Endothelial cell of umbilical vein (primary cell): ENCODE measurements at regions of chr19 and their contacts with region 1.

Region 1: DNA sequence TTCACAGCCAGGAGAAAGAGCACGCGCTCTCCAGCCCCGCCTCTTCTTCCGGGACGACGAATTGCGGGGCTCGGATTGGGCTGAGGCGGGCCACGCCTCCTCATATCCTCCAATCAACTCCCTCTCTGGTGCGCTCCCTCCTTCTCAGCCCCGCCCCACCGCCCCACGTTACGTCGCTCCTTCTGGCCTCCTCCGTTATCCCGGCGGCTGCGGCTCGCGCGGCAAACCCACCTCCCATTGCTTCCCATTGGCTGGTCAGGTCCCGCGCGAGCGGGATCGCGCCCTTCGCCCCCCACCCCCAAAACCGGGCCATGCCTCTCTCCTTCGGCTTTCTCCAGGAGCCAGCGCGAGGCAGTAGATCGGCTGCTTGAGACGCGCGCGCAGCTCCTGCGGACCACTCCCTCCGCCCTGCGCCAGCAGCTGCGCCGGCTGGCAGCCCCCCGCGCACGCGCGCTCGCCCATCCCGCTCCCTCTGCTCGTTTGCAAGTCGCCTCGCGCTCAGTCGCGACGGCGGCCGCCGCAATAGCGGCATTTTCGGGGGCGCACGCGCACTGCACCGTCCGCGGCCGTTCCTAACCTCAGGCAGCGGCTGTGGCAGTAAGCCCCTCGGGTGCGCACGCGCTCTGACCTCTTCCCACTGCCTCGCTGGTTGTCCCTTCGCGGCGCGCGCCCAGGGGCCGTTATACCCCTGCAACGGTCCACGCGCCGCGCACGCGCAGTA is 512 bp upstream of the ARHGAP35 start:
- DNase-seq: peak; percentile 99
- H3K4me3 ChIP-seq: peak overlapping the region; percentile 16 to 81 (median 52)
- H3K27ac ChIP-seq: peak overlapping the region; percentile 76
- H3K4me1 ChIP-seq: peaks cover 33% of the 10 kb centered on the region
- H3K27me3 ChIP-seq: no peaks in the 10 kb centered on the region
- CTCF ChIP-seq: no peak
- POLR2A ChIP-seq: peak; percentile 38

Region 2: GRCh38 chr19:46878613-46879375 is 18.5 kb after region 1 on chr19:
- CTCF ChIA-PET with region 1: interaction called, 19 read pairs
- POLR2A ChIA-PET with region 1: interaction called, 5 read pairs
- dilution Hi-C with region 1: no loop called
- intact Hi-C with region 1: loop called (anchors 2 kb)
- DNase-seq: peak; percentile 26
- H3K4me3 ChIP-seq: no peak overlapping the region
- H3K27ac ChIP-seq: peak overlapping the region; percentile 5
- H3K4me1 ChIP-seq: peaks cover 15% of the 10 kb centered on the region
- H3K27me3 ChIP-seq: no peaks in the 10 kb centered on the region
- CTCF ChIP-seq: no peak
- POLR2A ChIP-seq: no peak

Region 3: GRCh38 chr19:46924874-46925547 is 64.7 kb after region 1 on chr19:
- CTCF ChIA-PET with region 1: interaction called, 15 read pairs
- POLR2A ChIA-PET with region 1: no interaction called
- dilution Hi-C with region 1: no loop called
- intact Hi-C with region 1: loop called (anchors 2 kb)
- DNase-seq: peak; percentile 74
- H3K4me3 ChIP-seq: no peak overlapping the region
- H3K27ac ChIP-seq: peak overlapping the region; percentile 73
- H3K4me1 ChIP-seq: peaks cover 25% of the 10 kb centered on the region
- H3K27me3 ChIP-seq: no peaks in the 10 kb centered on the region
- CTCF ChIP-seq: no peak
- POLR2A ChIP-seq: peak; percentile 20

Region 4: GRCh38 chr19:46975925-46976782 is 115.9 kb after region 1 on chr19:
- CTCF ChIA-PET with region 1: interaction called, 33 read pairs
- POLR2A ChIA-PET with region 1: interaction called, 3 read pairs
- dilution Hi-C with region 1: no loop called
- intact Hi-C with region 1: loop called (anchors 1 kb)
- DNase-seq: peak; percentile 98
- H3K4me3 ChIP-seq: no peak overlapping the region
- H3K27ac ChIP-seq: peak overlapping the region; percentile 79
- H3K4me1 ChIP-seq: peaks cover 39% of the 10 kb centered on the region
- H3K27me3 ChIP-seq: no peaks in the 10 kb centered on the region
- CTCF ChIP-seq: no peak
- POLR2A ChIP-seq: no peak

Region 5: GRCh38 chr19:47035127-47036096 is 175.1 kb after region 1 on chr19:
- CTCF ChIA-PET with region 1: interaction called, 5 read pairs
- POLR2A ChIA-PET with region 1: no interaction called
- dilution Hi-C with region 1: no loop called
- intact Hi-C with region 1: loop called (anchors 1 kb)
- DNase-seq: peak; percentile 92
- H3K4me3 ChIP-seq: peak overlapping the region; percentile 32 to 75 (median 73)
- H3K27ac ChIP-seq: no peak overlapping the region
- H3K4me1 ChIP-seq: peaks cover 8% of the 10 kb centered on the region
- H3K27me3 ChIP-seq: peaks cover 0 to 2% of the 10 kb centered on the region in 2 experiments
- CTCF ChIP-seq: peak; percentile 84 to 94
- POLR2A ChIP-seq: no peak

Region 6: DNA sequence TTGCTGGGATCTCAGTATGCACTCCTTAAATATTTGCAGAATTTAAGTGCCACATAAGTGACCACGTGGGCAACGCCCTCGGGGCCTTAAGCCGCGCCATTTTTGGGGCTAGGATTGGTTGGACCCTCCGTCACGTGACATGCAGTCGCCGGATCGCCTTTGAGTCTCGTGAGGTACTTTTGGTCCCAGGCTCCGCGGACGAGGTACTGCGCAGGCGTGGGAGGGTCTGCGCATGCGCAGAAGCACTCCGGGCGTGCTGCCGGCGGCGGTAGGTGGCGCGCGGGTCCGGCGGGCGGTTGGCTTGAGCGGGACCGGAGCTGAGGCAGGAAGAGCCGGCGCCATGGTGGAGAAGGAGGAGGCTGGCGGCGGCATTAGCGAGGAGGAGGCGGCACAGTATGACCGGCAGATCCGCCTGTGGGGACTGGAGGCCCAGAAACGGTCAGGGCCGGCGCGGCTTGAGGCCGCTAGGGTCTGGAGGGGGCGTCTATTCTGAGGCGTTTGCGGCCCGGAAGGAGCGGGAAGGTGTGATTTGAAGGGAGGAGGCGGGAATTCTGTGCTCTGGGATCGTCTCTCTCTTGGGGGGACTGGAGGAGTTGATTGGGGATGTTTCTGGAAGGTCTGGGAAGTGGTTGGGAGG is 270.4 kb after region 1 on chr19 and contains the start of gene SAE1:
- CTCF ChIA-PET with region 1: no interaction called
- POLR2A ChIA-PET with region 1: no interaction called
- dilution Hi-C with region 1: no loop called
- intact Hi-C with region 1: loop called (anchors 5 kb)
- DNase-seq: peak; percentile 99
- H3K4me3 ChIP-seq: peak within 1 kb of the TSS; percentile 76 to 93 (median 82)
- H3K27ac ChIP-seq: peak within 1 kb of the TSS; percentile 78
- H3K4me1 ChIP-seq: peaks cover 30% of the 10 kb centered on the region
- H3K27me3 ChIP-seq: no peaks in the 10 kb centered on the region
- CTCF ChIP-seq: peak; percentile 39 to 64
- POLR2A ChIP-seq: peak; percentile 75
- total RNA-seq, gene SAE1: 219 and 223 TPM in 2 replicates